ENCODE measurements at regions of chr19 and their contacts with region 1.

Region 1: GRCh38 chr19:41691268-41691970 is 3.3 kb upstream of the CEACAM7 start:
- DNase-seq: peak; percentile 31
- H3K4me3 Mint-ChIP-seq: no peak overlapping the region
- H3K27ac Mint-ChIP-seq: no peak overlapping the region
- H3K4me1 Mint-ChIP-seq: no peaks in the 10 kb centered on the region
- H3K27me3 Mint-ChIP-seq: peaks cover 21% of the 10 kb centered on the region

Region 2: DNA sequence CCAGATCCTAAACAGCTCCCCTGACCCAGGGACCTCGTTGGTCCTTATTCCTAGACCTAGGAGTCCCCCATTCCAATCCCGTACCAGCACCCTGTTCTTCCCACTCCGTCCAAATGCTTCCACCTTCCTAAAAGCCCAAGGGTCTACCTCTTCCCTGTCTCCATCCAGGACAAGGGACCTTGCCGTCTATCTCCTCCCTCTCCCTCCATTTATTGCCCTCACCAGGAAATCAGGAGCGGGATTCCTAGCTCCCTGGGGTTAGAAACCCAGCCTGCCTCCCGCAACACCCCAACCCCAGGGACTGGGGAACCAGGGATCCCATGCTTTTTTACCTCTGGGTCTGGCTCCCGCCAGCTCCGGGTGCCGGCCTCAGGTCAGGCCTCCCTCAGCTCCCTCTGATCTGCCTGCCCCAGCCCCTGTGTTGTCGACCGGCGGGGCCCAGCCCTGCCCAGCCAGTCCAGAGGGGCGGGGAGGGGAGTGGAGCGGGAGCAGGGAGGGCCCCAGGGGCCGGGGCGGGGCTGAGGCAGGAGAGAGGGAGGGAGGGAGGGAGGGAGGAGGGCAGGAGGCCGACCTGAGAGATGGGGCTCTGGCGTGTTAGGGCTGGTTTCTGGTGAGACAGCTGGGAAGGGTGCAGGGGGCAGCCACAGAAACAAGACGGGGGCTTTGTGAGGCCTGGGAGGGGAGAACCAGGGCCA is 264.3 kb before region 1 on chr19 and contains the start of gene B3GNT8:
- CTCF ChIA-PET with region 1: no interaction called
- POLR2A ChIA-PET with region 1: no interaction called
- DNase-seq: peak; percentile 67
- H3K4me3 Mint-ChIP-seq: peak within 1 kb of the TSS; percentile 80
- H3K27ac Mint-ChIP-seq: peak within 1 kb of the TSS; percentile 81
- H3K4me1 Mint-ChIP-seq: peaks cover 45% of the 10 kb centered on the region
- H3K27me3 Mint-ChIP-seq: no peaks in the 10 kb centered on the region
- total RNA-seq, gene B3GNT8: 4.3 to 5.4 TPM

Region 3: GRCh38 chr19:41701401-41702075 is 10.1 kb after region 1 on chr19:
- CTCF ChIA-PET with region 1: interaction called, 11 read pairs
- POLR2A ChIA-PET with region 1: no interaction called
- DNase-seq: peak; percentile 13
- H3K4me3 Mint-ChIP-seq: no peak overlapping the region
- H3K27ac Mint-ChIP-seq: no peak overlapping the region
- H3K4me1 Mint-ChIP-seq: no peaks in the 10 kb centered on the region
- H3K27me3 Mint-ChIP-seq: peaks cover 10% of the 10 kb centered on the region

Measured in activated CD4-positive, alpha-beta memory T cell treated with anti-CD3 and anti-CD28 coated beads, Interleukin-2, amount 10 ng/mL, durations not matched to agents 7 days and 5 days (primary cell).